ENCODE measurements at regions of chr17 and their contacts with region 1.

Region 1: GRCh38 chr17:2624292-2624731 is 30.9 kb downstream of the PAFAH1B1 start:
- DNase-seq: no peak

Region 2: DNA sequence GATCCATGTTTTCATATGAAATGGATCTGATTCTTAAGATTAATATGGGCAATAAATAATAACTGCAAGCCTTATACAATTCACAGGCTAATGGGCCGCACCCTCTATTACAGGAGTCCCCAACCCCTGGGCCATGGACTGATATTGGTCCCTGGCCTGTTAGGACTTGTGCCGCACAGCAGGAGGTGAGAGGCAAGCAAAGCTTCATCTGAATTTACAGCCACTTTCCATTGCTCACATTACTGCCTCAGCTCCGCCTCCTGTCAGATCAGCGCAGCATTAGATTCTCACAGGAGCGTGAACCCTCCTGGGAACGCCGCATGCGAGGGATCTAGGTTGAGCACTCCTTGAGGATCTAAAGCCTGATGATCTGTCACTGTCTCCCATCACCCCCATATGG is 139.4 kb before region 1 on chr17:
- in situ Hi-C with region 1: loop called (anchors 25 kb)
- DNase-seq: no peak

Region 3: DNA sequence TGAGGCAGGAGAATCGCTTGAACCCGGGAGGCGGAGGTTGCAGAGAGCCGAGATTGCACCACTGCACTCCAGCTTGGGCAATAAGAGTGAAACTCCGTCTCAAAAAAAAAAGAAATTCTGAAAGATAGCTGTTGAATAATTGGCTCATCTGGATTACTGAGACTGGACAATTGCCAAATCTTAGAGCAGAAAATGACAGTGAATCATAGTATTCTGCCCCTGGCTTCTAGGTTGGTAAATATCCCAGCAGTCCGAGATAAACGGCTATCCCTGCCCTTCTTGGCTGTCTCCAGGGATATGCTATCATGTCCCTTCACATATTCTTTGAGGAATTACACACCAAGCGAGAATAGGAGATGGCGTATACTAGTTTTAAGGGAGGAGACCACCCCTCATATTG is 77.1 kb before region 1 on chr17:
- in situ Hi-C with region 1: no loop called
- DNase-seq: no peak